Colonic mucosa (tissue), 4 donors: ENCODE measurements at regions of chr10 and their contacts with region 1.

Region 1: GRCh38 chr10:101441541-101442455 is 87.8 kb downstream of the BTRC start:
- DNase-seq: peak; percentile 24
- H3K4me3 ChIP-seq: no peak overlapping the region
- H3K27ac ChIP-seq: no peak overlapping the region
- H3K4me1 ChIP-seq: no peaks in the 10 kb centered on the region
- H3K27me3 ChIP-seq: no peaks in the 10 kb centered on the region
- CTCF ChIP-seq: peak; percentile 38

Region 2: GRCh38 chr10:101272229-101272868 is 169.4 kb before region 1 on chr10:
- intact Hi-C with region 1: loop called (anchors 5 kb)
- DNase-seq: peak; percentile 60
- H3K4me3 ChIP-seq: no peak overlapping the region
- H3K27ac ChIP-seq: no peak overlapping the region
- H3K4me1 ChIP-seq: no peaks in the 10 kb centered on the region
- H3K27me3 ChIP-seq: peaks cover 3% of the 10 kb centered on the region
- CTCF ChIP-seq: peak; percentile 60

Region 3: GRCh38 chr10:101297901-101298486 is 143.8 kb before region 1 on chr10:
- intact Hi-C with region 1: loop called (anchors 10 kb)
- DNase-seq: peak; percentile 62
- H3K4me3 ChIP-seq: no peak overlapping the region
- H3K27ac ChIP-seq: no peak overlapping the region
- H3K4me1 ChIP-seq: no peaks in the 10 kb centered on the region
- H3K27me3 ChIP-seq: peaks cover 9% of the 10 kb centered on the region
- CTCF ChIP-seq: peak; percentile 89

Region 4: DNA sequence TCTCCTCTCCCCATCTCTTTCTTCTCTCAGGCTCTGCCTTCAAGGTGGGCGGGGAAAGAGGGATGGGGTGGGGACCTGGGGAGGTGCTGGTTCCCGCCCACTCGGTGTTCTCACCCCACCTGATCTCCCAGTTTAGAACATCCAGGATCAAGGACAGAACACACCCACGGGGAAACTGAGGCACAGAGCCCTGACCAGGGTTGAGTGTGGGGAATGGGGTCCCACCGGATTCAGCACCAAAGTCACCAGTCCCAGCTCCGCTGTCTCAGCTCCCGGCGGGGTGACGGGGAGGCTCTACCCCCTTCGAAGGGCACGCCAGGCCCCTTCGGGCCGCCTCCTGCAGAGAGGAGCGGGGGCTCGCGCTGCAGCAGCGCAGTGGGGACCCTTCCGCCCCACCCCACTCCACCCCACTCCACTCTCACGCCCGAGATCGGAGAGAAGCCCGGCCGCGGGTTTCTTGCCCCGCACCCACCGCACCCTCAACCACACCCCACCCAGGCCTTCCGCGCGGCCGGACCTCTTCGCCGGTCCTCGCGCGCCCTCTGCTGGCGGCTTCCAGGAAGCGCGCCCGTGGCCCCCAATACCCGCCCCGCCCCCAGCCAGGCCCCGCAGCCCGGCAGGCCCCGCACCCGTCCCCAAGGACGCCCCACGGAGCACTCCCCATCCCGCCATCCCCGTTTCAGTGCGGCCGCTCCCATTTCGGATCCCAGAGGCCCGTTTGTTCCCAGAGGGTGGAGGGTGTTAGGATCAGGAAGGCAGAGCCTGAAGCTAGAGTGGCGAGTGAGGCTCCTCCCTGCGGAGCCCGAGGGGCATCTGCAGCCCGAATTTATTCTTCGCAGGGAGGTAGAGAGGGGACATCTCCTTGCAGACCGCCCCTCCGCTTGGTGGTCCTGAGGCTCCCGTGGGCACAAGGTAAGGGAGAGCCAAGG is 128.3 kb after region 1 on chr10:
- intact Hi-C with region 1: loop called (anchors 10 kb)
- DNase-seq: peak; percentile 82
- H3K4me3 ChIP-seq: peak overlapping the region; percentile 55
- H3K27ac ChIP-seq: no peak overlapping the region
- H3K4me1 ChIP-seq: peaks cover 10% of the 10 kb centered on the region
- H3K27me3 ChIP-seq: peaks cover 36% of the 10 kb centered on the region
- CTCF ChIP-seq: peak; percentile 88